ENCODE measurements at regions of chr9 and their contacts with region 1.

Region 1: DNA sequence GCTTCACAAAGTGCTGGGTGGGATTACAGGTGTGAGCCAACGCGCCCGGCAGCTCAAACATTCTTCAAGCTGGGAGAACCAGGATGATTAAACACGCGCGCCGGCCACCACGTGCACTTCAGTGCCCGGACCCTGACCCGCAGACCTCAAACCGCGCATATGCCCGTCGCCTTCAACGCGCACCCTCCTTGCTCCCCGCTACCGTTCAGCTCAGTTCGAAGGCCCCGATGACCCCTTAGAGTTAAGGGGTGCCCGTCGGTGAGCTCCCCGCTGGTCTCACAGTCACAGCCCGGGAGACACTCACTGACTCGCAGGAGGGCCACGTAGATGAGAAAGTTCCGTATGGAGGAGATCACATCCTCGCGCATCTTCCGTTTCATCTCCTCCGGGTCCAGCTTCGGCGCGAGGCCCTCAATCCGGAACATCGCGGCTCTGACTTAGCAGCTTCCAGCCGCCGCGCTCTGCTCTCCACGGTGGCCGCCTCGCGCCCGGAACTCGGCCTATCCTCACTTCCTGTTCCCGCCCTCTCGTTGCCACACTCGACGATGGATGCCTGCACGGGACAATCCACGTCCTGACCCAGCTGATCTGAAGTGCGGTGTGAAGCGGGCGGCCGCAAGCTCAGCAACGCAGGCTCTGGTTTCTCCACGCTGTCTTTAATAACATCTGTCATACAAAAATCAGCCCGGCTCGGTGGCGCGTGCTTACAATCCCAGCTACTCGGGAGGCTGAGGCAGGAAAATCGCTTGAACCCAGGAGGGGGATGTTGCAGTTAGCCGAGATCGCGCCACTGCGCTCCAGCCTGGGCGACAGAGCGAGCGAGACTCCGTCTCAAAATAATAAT is at the start of gene TOMM5:
- DNase-seq: peak; percentile 94
- H3K4me3 Mint-ChIP-seq: peak within 1 kb of the TSS; percentile 97
- H3K27ac Mint-ChIP-seq: peak within 1 kb of the TSS; percentile 95
- H3K4me1 Mint-ChIP-seq: peaks cover 33% of the 10 kb centered on the region
- H3K27me3 Mint-ChIP-seq: peaks cover 17% of the 10 kb centered on the region
- total RNA-seq, gene TOMM5: 81.0 to 86.4 TPM

Region 2: GRCh38 chr9:37339923-37340322 is 252.4 kb before region 1 on chr9:
- CTCF ChIA-PET with region 1: no interaction called
- POLR2A ChIA-PET with region 1: no interaction called
- DNase-seq: no peak
- H3K4me3 Mint-ChIP-seq: no peak overlapping the region
- H3K27ac Mint-ChIP-seq: no peak overlapping the region
- H3K4me1 Mint-ChIP-seq: no peaks in the 10 kb centered on the region
- H3K27me3 Mint-ChIP-seq: no peaks in the 10 kb centered on the region

Region 3: GRCh38 chr9:37465249-37466036 is 126.9 kb before region 1 on chr9 and contains the start of gene ZBTB5:
- CTCF ChIA-PET with region 1: no interaction called
- POLR2A ChIA-PET with region 1: interaction called, 21 read pairs
- DNase-seq: peak; percentile 99
- H3K4me3 Mint-ChIP-seq: peak within 1 kb of the TSS; percentile 83
- H3K27ac Mint-ChIP-seq: peak within 1 kb of the TSS; percentile 89
- H3K4me1 Mint-ChIP-seq: peaks cover 34% of the 10 kb centered on the region
- H3K27me3 Mint-ChIP-seq: no peaks in the 10 kb centered on the region
- total RNA-seq, gene ZBTB5: 10.5 to 10.6 TPM

Region 4: GRCh38 chr9:37575921-37576721 is 16.2 kb before region 1 on chr9 and contains the start of gene FBXO10:
- CTCF ChIA-PET with region 1: interaction called, 23 read pairs
- POLR2A ChIA-PET with region 1: interaction called, 103 read pairs
- DNase-seq: peak; percentile 62
- H3K4me3 Mint-ChIP-seq: peak within 1 kb of the TSS; percentile 86
- H3K27ac Mint-ChIP-seq: peak within 1 kb of the TSS; percentile 64
- H3K4me1 Mint-ChIP-seq: peaks cover 20% of the 10 kb centered on the region
- H3K27me3 Mint-ChIP-seq: peaks cover 5% of the 10 kb centered on the region
- total RNA-seq, gene FBXO10: 5.8 to 6.7 TPM

Measured in activated CD4-positive, alpha-beta memory T cell treated with anti-CD3 and anti-CD28 coated beads, Interleukin-2, amount 10 ng/mL, durations not matched to agents 7 days and 5 days (primary cell).